Right lobe of liver (tissue), 6 donors: ENCODE measurements at regions of chr3 and their contacts with region 1.

Region 1: GRCh38 chr3:158443632-158444031 is 127.4 kb upstream of the MLF1 start:
- DNase-seq: no peak
- ATAC-seq: no peak
- H3K4me3 ChIP-seq: no peak overlapping the region
- H3K27ac ChIP-seq: no peak overlapping the region
- H3K4me1 ChIP-seq: no peaks in the 10 kb centered on the region
- H3K27me3 ChIP-seq: no peaks in the 10 kb centered on the region
- CTCF ChIP-seq: no peak
- POLR2A ChIP-seq: no peak

Region 2: DNA sequence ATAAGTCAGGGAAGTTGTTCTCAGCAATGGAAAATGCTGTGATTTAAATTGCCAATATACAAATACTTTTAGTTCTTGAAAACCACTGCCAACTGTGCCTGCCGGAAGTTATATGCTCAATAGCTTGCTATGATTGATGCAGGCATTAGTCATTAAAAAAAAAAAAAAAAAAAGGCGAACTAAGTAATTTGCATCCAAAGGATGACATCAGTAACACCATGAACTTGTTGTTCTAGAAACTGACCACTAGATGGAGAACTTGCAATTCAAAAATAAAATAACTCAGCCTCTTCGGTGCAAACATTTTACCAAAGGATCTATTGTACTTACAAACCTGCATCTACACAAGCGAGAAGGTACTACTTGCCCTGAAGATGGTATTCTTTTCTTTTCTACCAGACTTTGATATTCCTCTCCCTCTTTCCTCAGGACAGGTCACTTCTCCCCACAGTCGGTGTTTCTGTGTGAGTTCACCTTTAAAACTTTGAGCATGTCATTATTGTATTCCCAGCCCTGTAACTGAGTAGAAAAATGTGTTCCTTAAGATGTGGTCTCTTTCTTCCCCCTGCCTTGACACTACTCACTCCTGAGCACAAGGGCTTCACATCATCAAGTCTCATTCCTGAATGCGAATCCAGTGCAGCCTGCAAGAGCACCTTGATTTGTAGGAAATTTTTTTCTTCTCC is 825.4 kb before region 1 on chr3:
- intact Hi-C with region 1: loop called in 1 of 2 experiments (anchors 10 kb)
- DNase-seq: no peak
- ATAC-seq: peak; percentile 67 to 90 (median 74)
- H3K4me3 ChIP-seq: no peak overlapping the region
- H3K27ac ChIP-seq: no peak overlapping the region
- H3K4me1 ChIP-seq: no peaks in the 10 kb centered on the region
- H3K27me3 ChIP-seq: no peaks in the 10 kb centered on the region
- CTCF ChIP-seq: peak; percentile 62 to 69 (median 65)
- POLR2A ChIP-seq: no peak